Activated CD4-positive, alpha-beta T cell treated with anti-CD3 and anti-CD28 coated beads for 36 hours (primary cell): ENCODE measurements at regions of chr1 and their contacts with region 1.

Region 1: GRCh38 chr1:153922972-153923925 is at the start of gene GATAD2B:
- DNase-seq: peak; percentile 99
- ATAC-seq: peak; percentile 94
- H3K4me3 Mint-ChIP-seq: peak within 1 kb of the TSS; percentile 89
- H3K27ac Mint-ChIP-seq: peak within 1 kb of the TSS; percentile 97
- H3K4me1 Mint-ChIP-seq: peaks cover 36% of the 10 kb centered on the region
- H3K27me3 Mint-ChIP-seq: no peaks in the 10 kb centered on the region
- total RNA-seq, gene GATAD2B: 57.0 to 63.9 TPM

Region 2: GRCh38 chr1:153633716-153634665 is 289.3 kb before region 1 on chr1 and contains the start of gene CHTOP:
- CTCF ChIA-PET with region 1: no interaction called
- POLR2A ChIA-PET with region 1: no interaction called
- intact Hi-C with region 1: loop called in 1 of 2 experiments (anchors 2 kb)
- DNase-seq: peak; percentile 98
- ATAC-seq: peak; percentile 93
- H3K4me3 Mint-ChIP-seq: peak within 1 kb of the TSS; percentile 98
- H3K27ac Mint-ChIP-seq: peak within 1 kb of the TSS; percentile 98
- H3K4me1 Mint-ChIP-seq: peaks cover 50% of the 10 kb centered on the region
- H3K27me3 Mint-ChIP-seq: no peaks in the 10 kb centered on the region
- total RNA-seq, gene CHTOP: 85.1 to 91.4 TPM

Region 3: GRCh38 chr1:153796791-153797659 is 126.2 kb before region 1 on chr1:
- CTCF ChIA-PET with region 1: interaction called, 4 read pairs
- POLR2A ChIA-PET with region 1: no interaction called
- intact Hi-C with region 1: loop called (anchors 2 kb)
- DNase-seq: peak; percentile 92
- ATAC-seq: peak; percentile 92
- H3K4me3 Mint-ChIP-seq: no peak overlapping the region
- H3K27ac Mint-ChIP-seq: peak overlapping the region; percentile 38
- H3K4me1 Mint-ChIP-seq: no peaks in the 10 kb centered on the region
- H3K27me3 Mint-ChIP-seq: no peaks in the 10 kb centered on the region

Region 4: DNA sequence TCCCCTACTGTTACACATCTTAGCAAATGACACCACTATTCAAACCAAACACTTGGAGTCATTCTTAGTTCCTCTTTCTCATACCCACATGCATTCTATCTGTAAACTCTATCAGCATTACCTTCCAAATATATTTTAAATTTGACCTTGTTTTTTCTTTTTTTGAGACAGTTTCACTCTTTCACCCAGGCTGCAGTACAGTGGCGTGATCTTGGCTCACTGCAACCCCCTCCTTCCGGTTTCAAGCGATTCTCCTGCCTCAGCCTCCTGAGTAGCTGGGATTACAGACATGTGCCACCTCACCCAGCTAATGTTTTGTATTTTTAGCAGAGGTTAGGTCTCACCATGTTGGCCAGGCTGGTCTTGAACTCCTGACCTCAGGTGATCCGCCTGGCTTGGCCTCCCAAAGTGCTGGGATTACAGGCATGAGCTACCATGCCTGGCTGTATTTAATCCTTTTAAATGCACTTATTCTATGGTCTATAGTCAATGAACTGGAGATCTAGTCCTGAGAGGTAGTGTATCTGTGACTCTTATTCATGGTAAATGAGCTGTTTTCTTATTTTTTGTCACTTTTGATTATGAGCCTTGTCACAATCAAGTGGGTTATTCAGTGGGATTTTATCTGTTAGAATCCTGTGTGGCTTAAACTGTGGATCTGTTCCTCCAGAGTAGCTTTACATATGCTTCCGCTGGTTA is 73.6 kb before region 1 on chr1:
- CTCF ChIA-PET with region 1: no interaction called
- POLR2A ChIA-PET with region 1: interaction called, 5 read pairs
- intact Hi-C with region 1: loop called in 1 of 2 experiments (anchors 5 kb)
- DNase-seq: peak; percentile 59
- ATAC-seq: peak; percentile 80
- H3K4me3 Mint-ChIP-seq: peak overlapping the region; percentile 22
- H3K27ac Mint-ChIP-seq: peak overlapping the region; percentile 94
- H3K4me1 Mint-ChIP-seq: peaks cover 29% of the 10 kb centered on the region
- H3K27me3 Mint-ChIP-seq: no peaks in the 10 kb centered on the region

Region 5: GRCh38 chr1:153946622-153947241 is 23.5 kb after region 1 on chr1 and contains the start of gene DENND4B:
- CTCF ChIA-PET with region 1: interaction called, 8 read pairs
- POLR2A ChIA-PET with region 1: interaction called, 24 read pairs
- intact Hi-C with region 1: loop called (anchors 1 kb)
- DNase-seq: peak; percentile 87
- ATAC-seq: peak; percentile 74
- H3K4me3 Mint-ChIP-seq: peak within 1 kb of the TSS; percentile 88
- H3K27ac Mint-ChIP-seq: peak within 1 kb of the TSS; percentile 96
- H3K4me1 Mint-ChIP-seq: peaks cover 24% of the 10 kb centered on the region
- H3K27me3 Mint-ChIP-seq: no peaks in the 10 kb centered on the region
- total RNA-seq, gene DENND4B: 100 to 110 TPM

Region 6: GRCh38 chr1:154183045-154183915 is 260.0 kb after region 1 on chr1:
- CTCF ChIA-PET with region 1: no interaction called
- POLR2A ChIA-PET with region 1: no interaction called
- intact Hi-C with region 1: loop called in 1 of 2 experiments (anchors 1 kb)
- DNase-seq: peak; percentile 98
- ATAC-seq: peak; percentile 72
- H3K4me3 Mint-ChIP-seq: peak overlapping the region; percentile 99
- H3K27ac Mint-ChIP-seq: peak overlapping the region; percentile 100
- H3K4me1 Mint-ChIP-seq: peaks cover 39% of the 10 kb centered on the region
- H3K27me3 Mint-ChIP-seq: no peaks in the 10 kb centered on the region

Region 7: DNA sequence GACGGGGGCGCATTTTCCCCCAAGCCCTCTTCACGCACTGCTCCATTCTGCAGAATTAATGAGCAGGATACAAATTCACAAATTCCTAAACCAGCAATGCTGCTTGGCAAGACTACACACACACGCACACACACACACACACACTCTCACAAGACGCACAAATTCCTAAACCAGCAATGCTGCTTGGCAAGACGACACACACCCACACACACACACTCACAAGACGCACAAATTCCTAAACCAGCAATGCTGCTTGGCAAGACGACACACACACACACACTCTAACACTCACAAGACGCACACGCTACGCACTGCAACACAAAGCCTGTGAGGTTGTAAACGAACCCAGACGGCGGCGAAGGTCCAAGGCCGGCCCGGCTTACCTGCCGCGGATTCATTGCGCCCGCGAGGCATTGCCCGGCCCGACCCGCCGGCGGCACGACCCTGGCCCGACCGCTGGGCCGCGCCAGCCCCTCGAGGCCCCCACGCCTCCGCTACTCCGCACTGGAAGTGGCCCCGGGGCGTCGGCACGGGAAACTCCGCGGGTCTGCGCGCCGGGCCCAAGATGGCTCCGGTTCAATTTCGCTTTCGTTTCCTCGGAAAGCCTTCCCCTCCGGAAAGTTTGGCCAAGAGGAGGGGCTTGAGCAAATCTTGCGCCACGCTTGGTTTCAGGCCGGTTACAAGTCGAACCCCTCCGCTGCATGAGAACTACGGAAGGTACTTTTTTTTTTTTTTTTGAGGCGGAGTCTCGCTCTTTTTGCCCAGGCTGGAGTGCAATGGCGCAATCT is 684.6 kb after region 1 on chr1 and contains the start of gene ADAR:
- CTCF ChIA-PET with region 1: no interaction called
- POLR2A ChIA-PET with region 1: no interaction called
- intact Hi-C with region 1: loop called in 1 of 2 experiments (anchors 2 kb)
- DNase-seq: peak; percentile 95
- ATAC-seq: peak; percentile 69
- H3K4me3 Mint-ChIP-seq: peak within 1 kb of the TSS; percentile 95
- H3K27ac Mint-ChIP-seq: peak within 1 kb of the TSS; percentile 99
- H3K4me1 Mint-ChIP-seq: peaks cover 75% of the 10 kb centered on the region
- H3K27me3 Mint-ChIP-seq: no peaks in the 10 kb centered on the region
- total RNA-seq, gene ADAR: 310 to 332 TPM